ENCODE measurements at regions of chr6 and their contacts with region 1.

Region 1: DNA sequence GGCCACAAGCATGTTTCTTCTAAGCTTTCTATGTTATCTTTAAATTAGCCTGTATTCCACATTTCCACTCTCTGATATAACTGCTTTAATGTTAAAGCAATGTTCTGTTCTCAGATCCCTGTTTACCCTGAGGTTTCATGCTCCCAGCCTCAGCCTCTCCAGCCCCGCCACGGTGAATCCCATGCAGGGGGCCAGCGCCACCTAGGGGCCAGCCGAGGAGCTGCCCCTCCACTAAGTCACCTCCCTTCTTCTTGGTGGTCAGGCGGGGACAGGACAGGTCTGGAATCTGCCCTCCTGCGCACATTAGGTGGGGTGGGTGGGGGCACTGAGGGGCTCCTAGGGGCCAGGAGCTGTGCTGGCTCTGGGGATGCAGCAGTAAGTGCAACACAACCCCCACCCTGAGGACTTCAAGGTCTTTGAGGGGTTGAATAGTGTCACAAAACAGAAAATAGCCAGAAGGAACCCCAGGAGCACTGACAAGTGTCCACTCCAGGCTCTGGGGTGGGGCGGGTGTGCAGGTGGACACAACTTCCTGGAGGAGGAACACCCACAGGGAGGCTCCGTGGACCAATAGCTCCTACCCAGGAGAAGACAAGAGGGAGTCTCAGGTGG is 61.6 kb downstream of the RAB44 start:
- DNase-seq: peak; percentile 94
- H3K4me3 ChIP-seq: peak overlapping the region in 1 of 2 experiments; percentile 39; a peak in 1 of 4 replicates
- H3K27ac ChIP-seq: no peak overlapping the region
- H3K4me1 ChIP-seq: peaks cover 0 to 15% of the 10 kb centered on the region in 2 experiments; a peak in 2 of 4 replicates
- H3K27me3 ChIP-seq: no peaks in the 10 kb centered on the region
- CTCF ChIP-seq: peak; percentile 98
- EP300 ChIP-seq: no peak
- RAD21 ChIP-seq: peak; percentile 95

Region 2: GRCh38 chr6:36423101-36423824 is 336.0 kb before region 1 on chr6:
- CTCF ChIA-PET with region 1: interaction called, 11 read pairs
- POLR2A ChIA-PET with region 1: no interaction called
- DNase-seq: peak; percentile 97
- H3K4me3 ChIP-seq: peak overlapping the region; percentile 62 to 63
- H3K27ac ChIP-seq: peak overlapping the region; percentile 61 to 74
- H3K4me1 ChIP-seq: peaks cover 0 to 9% of the 10 kb centered on the region in 2 experiments; a peak in 1 of 4 replicates
- H3K27me3 ChIP-seq: no peaks in the 10 kb centered on the region
- CTCF ChIP-seq: peak; percentile 72
- EP300 ChIP-seq: no peak
- RAD21 ChIP-seq: peak; percentile 75

Region 3: GRCh38 chr6:36623547-36624459 is 135.5 kb before region 1 on chr6:
- CTCF ChIA-PET with region 1: interaction called, 111 read pairs
- POLR2A ChIA-PET with region 1: no interaction called
- DNase-seq: peak; percentile 83
- H3K4me3 ChIP-seq: no peak overlapping the region; a peak in 1 of 4 replicates
- H3K27ac ChIP-seq: no peak overlapping the region
- H3K4me1 ChIP-seq: peaks cover 0 to 11% of the 10 kb centered on the region in 2 experiments; a peak in 2 of 4 replicates
- H3K27me3 ChIP-seq: no peaks in the 10 kb centered on the region
- CTCF ChIP-seq: peak; percentile 88
- EP300 ChIP-seq: peak in 1 of 2 experiments; percentile 55; a peak in 1 of 4 replicates
- RAD21 ChIP-seq: peak; percentile 94

Region 4: GRCh38 chr6:36716476-36717093 is 42.7 kb before region 1 on chr6:
- CTCF ChIA-PET with region 1: interaction called, 15 read pairs
- POLR2A ChIA-PET with region 1: no interaction called
- DNase-seq: no peak
- H3K4me3 ChIP-seq: no peak overlapping the region
- H3K27ac ChIP-seq: no peak overlapping the region
- H3K4me1 ChIP-seq: peaks cover 0 to 13% of the 10 kb centered on the region in 2 experiments; a peak in 1 of 4 replicates
- H3K27me3 ChIP-seq: no peaks in the 10 kb centered on the region
- CTCF ChIP-seq: no peak
- EP300 ChIP-seq: no peak
- RAD21 ChIP-seq: no peak

Region 5: GRCh38 chr6:36735110-36736071 is 23.9 kb before region 1 on chr6:
- CTCF ChIA-PET with region 1: interaction called, 21 read pairs
- POLR2A ChIA-PET with region 1: no interaction called
- DNase-seq: no peak
- H3K4me3 ChIP-seq: no peak overlapping the region
- H3K27ac ChIP-seq: no peak overlapping the region
- H3K4me1 ChIP-seq: peaks cover 0 to 10% of the 10 kb centered on the region in 2 experiments; a peak in 1 of 4 replicates
- H3K27me3 ChIP-seq: no peaks in the 10 kb centered on the region
- CTCF ChIP-seq: no peak
- EP300 ChIP-seq: no peak
- RAD21 ChIP-seq: no peak

Region 6: DNA sequence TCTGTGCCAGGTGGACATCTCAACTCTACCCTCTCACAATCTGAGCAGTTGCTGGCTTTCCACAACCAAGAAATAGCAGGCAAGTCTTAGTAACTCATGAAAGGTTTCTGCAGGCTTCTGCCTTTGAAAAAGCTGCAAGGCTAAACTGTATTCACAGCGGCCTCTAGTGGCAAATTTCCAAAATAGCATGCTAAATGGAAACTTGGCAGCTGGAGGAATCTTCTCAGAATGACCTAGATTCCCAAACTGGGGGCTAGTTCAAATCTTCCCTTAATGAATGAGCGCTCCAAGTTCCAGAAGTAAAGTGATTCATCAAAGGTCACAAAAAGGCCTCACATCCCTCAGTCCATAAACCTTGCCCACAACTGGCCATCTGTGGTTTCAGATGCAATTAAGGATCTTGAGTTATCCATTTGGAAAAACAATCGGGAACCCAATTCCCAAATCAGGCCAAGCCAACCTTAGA is 91.9 kb after region 1 on chr6:
- CTCF ChIA-PET with region 1: interaction called, 200 read pairs
- POLR2A ChIA-PET with region 1: no interaction called
- DNase-seq: peak; percentile 61
- H3K4me3 ChIP-seq: no peak overlapping the region; a peak in 1 of 4 replicates
- H3K27ac ChIP-seq: no peak overlapping the region
- H3K4me1 ChIP-seq: peaks cover 10 to 13% of the 10 kb centered on the region in 2 experiments; a peak in 2 of 4 replicates
- H3K27me3 ChIP-seq: no peaks in the 10 kb centered on the region
- CTCF ChIP-seq: peak; percentile 75
- EP300 ChIP-seq: no peak
- RAD21 ChIP-seq: peak; percentile 83

Region 7: DNA sequence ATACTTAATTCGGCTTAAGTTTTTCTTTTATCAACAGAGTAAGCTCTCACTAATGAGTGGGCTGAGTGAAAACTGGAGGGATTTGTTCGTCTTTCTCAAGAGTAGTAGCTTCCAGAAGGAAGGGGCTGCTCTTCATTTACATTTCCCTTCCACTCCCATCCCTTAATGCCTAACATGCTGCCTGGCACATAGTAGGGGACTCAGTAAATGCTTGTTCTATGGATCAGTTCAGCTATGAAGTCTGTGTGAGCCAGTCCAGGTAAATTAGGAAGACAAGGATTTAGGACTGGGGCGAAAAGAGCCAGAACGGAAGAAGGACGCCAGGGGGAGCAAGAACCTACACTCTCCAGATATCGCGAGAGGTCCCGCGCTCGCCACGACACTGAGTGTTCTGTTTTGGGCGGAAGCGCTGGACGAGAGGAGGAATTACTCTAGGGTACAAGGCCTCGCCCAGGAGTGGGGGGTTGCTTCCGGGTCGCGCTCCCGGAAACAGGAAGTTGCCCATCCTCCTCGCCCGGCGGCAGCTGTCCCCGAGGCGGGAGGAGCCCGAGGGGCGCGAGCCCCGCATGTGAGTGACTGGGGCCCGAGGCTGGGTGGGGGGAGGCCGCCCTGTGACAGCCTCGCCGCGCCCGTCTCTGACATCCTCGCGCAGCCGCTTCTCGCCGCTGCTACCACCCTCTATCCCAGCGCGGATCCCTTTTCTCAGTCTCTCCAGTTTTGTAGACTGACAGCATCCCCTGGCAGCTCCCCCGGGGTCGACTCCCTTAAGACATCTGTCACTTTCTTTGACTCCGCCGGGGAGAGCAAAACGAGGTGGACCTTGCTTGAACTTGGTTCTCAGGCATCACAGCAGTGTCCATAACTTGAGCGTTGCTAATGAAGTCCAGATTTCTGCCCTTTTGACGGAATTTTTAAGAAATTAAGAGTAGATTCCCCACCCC is 126.5 kb after region 1 on chr6 and contains the start of gene C6orf89:
- CTCF ChIA-PET with region 1: interaction called, 10 read pairs
- POLR2A ChIA-PET with region 1: no interaction called
- DNase-seq: peak; percentile 94
- H3K4me3 ChIP-seq: peak within 1 kb of the TSS; percentile 90 to 96
- H3K27ac ChIP-seq: peak within 1 kb of the TSS; percentile 73 to 84
- H3K4me1 ChIP-seq: peaks cover 0 to 5% of the 10 kb centered on the region in 2 experiments; a peak in 1 of 4 replicates
- H3K27me3 ChIP-seq: no peaks in the 10 kb centered on the region
- CTCF ChIP-seq: peak; percentile 79
- EP300 ChIP-seq: peak in 1 of 2 experiments; percentile 36; a peak in 1 of 4 replicates
- RAD21 ChIP-seq: peak; percentile 58
- polyA plus RNA-seq, gene C6orf89: 20.4 and 29.8 TPM in 2 replicates

Measured in SK-N-SH (cell line).